ENCODE measurements at regions of chr6 and their contacts with region 1.

Region 1: DNA sequence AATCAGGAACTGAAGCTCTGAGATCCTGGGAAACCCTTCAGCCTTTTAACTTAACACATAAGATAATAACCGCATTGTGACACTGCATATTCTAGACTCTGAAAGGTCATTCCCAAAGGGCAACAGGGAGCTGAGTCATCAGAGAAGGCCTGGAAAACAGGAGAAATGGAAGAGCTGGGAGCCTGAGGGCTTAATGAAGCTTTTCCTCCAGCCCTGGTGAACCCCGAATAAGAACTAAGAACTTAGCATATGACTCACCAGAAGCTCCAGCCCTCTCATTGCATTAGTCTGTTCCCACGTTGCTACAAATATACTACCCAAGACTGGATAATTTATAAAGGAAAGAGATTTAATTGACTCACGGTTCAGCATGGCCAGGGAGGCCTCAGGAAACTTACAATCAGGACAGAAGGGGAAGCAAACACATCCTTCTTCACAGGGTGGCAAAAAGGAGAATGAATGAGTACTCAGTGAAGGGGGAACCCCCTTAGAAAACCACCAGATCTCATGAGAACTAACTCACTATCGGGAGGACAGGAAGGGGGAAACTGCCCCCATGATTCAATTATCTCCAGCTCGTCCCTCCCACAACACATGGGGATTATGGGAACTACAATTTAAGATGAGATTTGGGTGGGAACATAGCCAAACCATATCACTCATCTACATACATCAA is 648.5 kb downstream of the TFAP2A start:
- DNase-seq: peak; percentile 12
- ATAC-seq: peak; percentile 84
- H3K4me3 ChIP-seq: no peak overlapping the region
- H3K27ac ChIP-seq: peak overlapping the region; percentile 39; the same call in 1 of the 2 replicates
- H3K4me1 ChIP-seq: no peaks in the 10 kb centered on the region
- H3K27me3 ChIP-seq: no peaks in the 10 kb centered on the region
- CTCF ChIP-seq: no peak
- EP300 ChIP-seq: no peak
- POLR2A ChIP-seq: no peak
- RAD21 ChIP-seq: no peak

Region 2: DNA sequence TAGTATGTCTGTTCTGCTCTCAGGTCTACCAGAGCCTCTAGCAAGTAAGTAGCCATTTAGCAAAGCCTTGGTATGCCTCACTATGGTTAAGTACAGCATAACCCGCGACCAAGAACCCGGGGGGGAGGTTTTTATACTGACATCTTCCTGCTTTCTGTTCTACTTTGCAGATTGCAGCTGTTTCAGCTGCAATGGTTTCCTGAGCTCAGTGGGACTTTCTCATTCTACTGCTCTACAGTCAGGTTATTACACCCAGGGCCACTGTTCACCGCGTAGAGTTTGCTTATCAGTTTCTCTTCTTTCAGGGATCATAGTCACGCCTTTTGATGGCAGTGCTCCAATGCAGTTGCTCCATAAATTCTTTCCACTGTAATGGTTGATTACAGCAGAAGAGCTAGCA is 17.2 kb after region 1 on chr6:
- CTCF ChIA-PET with region 1: interaction called, 7 read pairs
- POLR2A ChIA-PET with region 1: interaction called, 3 read pairs
- RAD21 ChIA-PET with region 1: interaction called, 13 read pairs
- SMC1A ChIA-PET with region 1: interaction called, 16 read pairs
- in situ Hi-C with region 1: no loop called
- intact Hi-C with region 1: no loop called
- DNase-seq: no peak
- ATAC-seq: peak; percentile 29; the same call in 2 of the 3 replicates
- H3K4me3 ChIP-seq: no peak overlapping the region
- H3K27ac ChIP-seq: no peak overlapping the region
- H3K4me1 ChIP-seq: no peaks in the 10 kb centered on the region
- H3K27me3 ChIP-seq: no peaks in the 10 kb centered on the region
- CTCF ChIP-seq: no peak
- EP300 ChIP-seq: no peak
- POLR2A ChIP-seq: no peak
- RAD21 ChIP-seq: 0 out of 2 replicates have a peak, but pooled peaks have one; percentile 24

Region 3: DNA sequence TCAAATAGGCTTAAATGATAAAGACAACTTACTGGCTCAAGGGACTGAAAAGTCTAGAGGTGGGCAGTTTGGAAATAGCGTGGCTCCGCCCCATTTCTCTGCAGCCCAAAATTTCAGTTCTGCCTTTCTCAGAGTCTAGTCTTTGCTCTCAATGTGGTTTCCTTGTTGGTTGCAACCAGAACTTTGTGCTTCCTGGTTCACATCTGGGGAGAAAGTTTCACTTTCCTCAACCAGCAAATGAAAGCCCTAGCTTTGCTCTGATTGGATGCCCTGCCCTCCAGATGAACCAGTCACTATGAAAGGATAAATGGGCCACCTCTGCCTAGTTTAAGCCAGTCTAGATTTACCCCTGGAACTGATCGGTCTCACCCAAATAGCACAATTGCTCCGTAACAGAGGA is 1135.4 kb after region 1 on chr6:
- CTCF ChIA-PET with region 1: no interaction called
- POLR2A ChIA-PET with region 1: no interaction called
- RAD21 ChIA-PET with region 1: no interaction called
- SMC1A ChIA-PET with region 1: no interaction called
- in situ Hi-C with region 1: no loop called
- intact Hi-C with region 1: loop called (anchors 10 kb)
- DNase-seq: peak; percentile 59
- ATAC-seq: peak; percentile 96
- H3K4me3 ChIP-seq: no peak overlapping the region
- H3K27ac ChIP-seq: no peak overlapping the region
- H3K4me1 ChIP-seq: peaks cover 9% of the 10 kb centered on the region; the same call in 1 of the 2 replicates
- H3K27me3 ChIP-seq: no peaks in the 10 kb centered on the region
- CTCF ChIP-seq: no peak
- EP300 ChIP-seq: no peak
- POLR2A ChIP-seq: no peak
- RAD21 ChIP-seq: no peak